Natural killer cell (primary cell): ENCODE measurements at regions of chr10 and their contacts with region 1.

Region 1: DNA sequence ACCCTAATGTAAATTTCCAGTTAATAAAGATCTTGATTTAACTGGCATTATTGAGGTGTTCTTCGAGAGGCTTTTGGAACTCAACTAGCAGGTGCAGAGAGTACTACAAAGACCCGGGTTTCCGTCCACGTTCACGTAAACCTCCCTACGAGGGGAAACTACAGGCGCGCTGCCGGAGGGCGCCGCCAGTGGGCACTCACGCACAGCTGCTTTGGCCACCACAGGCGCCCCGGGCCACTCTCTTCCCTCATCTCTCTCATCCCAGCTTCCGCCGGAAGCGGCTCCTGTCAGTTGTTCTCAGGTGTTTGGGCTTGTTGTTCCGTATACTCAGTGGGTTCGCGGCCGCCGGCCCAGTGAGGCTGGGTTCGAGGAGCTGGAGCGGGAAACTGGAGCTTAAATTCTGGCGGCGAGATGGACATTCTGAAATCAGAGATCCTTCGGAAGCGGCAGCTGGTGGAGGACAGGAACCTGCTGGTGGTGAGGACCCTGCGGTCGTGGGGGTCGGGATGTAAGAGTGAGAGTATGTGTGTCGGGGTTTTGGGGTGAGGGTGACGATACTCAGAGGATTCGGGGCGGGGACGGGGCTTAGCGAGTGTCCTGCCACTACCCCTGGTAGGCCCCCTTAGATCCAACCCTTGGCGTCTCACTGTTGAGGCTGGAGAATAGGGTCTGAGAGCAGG is at the start of gene PRPF18:
- DNase-seq: peak; percentile 92 to 96
- ATAC-seq: peak; percentile 99 to 100 (median 100)
- H3K4me3 ChIP-seq: peak within 1 kb of the TSS; percentile 96
- H3K4me3 Mint-ChIP-seq: peak within 1 kb of the TSS; percentile 100
- H3K27ac ChIP-seq: peak within 1 kb of the TSS; percentile 60
- H3K27ac Mint-ChIP-seq: peak within 1 kb of the TSS; percentile 95 to 99
- H3K4me1 ChIP-seq: peaks cover 13% of the 10 kb centered on the region
- H3K4me1 Mint-ChIP-seq: peaks cover 29 to 38% of the 10 kb centered on the region in 2 donors
- H3K27me3 ChIP-seq: peaks cover 2% of the 10 kb centered on the region
- H3K27me3 Mint-ChIP-seq: peaks cover 10 to 17% of the 10 kb centered on the region in 2 donors
- CTCF ChIP-seq: peak; percentile 92
- total RNA-seq, gene PRPF18: 29.5 to 39.3 (median 35.1) TPM

Region 2: GRCh38 chr10:13146383-13146782 is 440.4 kb before region 1 on chr10:
- intact Hi-C with region 1: no loop called
- DNase-seq: no peak
- ATAC-seq: no peak
- H3K4me3 ChIP-seq: no peak overlapping the region
- H3K4me3 Mint-ChIP-seq: no peak overlapping the region
- H3K27ac ChIP-seq: no peak overlapping the region
- H3K27ac Mint-ChIP-seq: no peak overlapping the region
- H3K4me1 ChIP-seq: no peaks in the 10 kb centered on the region
- H3K4me1 Mint-ChIP-seq: no peaks in the 10 kb centered on the region
- H3K27me3 ChIP-seq: no peaks in the 10 kb centered on the region
- H3K27me3 Mint-ChIP-seq: no peaks in the 10 kb centered on the region
- CTCF ChIP-seq: no peak

Region 3: DNA sequence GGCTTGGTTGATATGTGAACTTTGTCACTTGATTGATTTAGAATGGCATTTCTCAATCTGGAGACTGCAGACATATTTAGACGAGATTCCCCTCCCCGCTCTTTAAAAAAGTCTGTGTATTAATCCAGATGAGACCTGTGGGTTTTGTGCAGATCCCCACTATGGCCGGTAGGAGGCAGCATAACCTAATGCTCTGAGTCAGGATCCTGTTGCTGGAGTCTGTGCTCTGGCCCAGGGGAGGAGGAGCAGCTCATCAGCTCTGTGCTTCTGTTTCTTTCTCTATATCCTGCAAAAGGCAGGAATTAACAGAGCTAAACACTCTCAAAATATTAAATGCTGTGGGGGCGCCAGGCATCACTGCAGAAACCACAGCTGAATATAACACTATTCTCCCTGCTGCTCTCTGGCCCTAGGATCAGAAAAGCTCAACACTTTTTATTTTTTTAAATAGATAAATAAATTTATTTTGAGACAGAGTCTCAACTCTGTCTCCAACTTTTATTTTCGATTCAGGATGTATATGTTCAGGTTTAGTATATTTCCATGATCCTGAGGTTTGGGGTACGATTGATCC is 214.8 kb before region 1 on chr10:
- intact Hi-C with region 1: loop called (anchors 5 kb)
- DNase-seq: peak; percentile 38 to 90
- ATAC-seq: peak; percentile 90 to 100 (median 99)
- H3K4me3 ChIP-seq: no peak overlapping the region
- H3K4me3 Mint-ChIP-seq: no peak overlapping the region
- H3K27ac ChIP-seq: no peak overlapping the region
- H3K27ac Mint-ChIP-seq: no peak overlapping the region
- H3K4me1 ChIP-seq: no peaks in the 10 kb centered on the region
- H3K4me1 Mint-ChIP-seq: peaks cover 0 to 6% of the 10 kb centered on the region in 2 donors
- H3K27me3 ChIP-seq: no peaks in the 10 kb centered on the region
- H3K27me3 Mint-ChIP-seq: peaks cover 0 to 7% of the 10 kb centered on the region in 2 donors
- CTCF ChIP-seq: peak; percentile 95

Region 4: DNA sequence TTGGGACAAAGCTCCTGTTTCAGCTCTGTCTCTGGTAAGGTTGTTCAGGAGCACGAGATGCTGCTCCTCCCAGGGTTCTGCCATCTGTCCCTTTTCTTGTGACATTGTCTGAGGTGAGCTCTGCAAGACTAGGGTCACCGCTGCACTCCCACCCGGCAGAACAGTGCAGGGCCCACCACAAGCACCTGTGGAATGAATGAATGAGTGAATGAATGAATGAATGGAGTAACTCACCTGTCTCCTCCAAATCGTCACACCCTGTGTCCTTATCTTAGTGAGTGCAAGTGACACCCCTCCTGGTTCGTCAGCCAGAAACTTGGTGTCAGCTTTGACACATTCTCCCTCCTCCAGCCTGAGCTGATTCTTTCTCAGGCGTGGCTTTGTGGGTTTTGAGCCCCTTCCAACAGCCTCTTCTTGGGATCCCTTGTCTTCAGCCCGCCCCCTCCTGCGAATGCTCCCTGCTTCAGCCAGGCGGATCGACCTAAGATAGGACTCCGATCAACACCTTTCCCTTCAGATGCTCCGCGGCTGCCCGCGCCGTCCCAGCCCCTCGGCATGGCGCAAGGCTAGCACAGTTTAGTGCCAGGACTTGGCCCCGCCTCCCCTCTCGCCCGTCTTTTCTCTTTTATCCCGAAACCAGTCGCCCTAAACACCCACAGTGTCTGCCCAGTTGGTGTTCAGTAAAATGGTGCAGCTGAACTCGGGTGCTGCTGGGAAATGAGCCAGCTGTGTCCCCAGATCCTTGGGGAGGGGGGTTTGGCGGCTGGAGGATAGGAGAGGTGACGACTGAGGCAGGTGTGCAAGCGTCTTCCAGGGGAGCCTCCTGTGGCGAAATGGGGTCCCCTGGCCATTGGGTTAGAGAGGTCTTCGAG is 147.3 kb before region 1 on chr10:
- intact Hi-C with region 1: no loop called
- DNase-seq: peak in 1 of 2 donors; percentile 11
- ATAC-seq: peak in 1 of 3 donors; percentile 10
- H3K4me3 ChIP-seq: no peak overlapping the region
- H3K4me3 Mint-ChIP-seq: peak overlapping the region; percentile 58
- H3K27ac ChIP-seq: no peak overlapping the region
- H3K27ac Mint-ChIP-seq: no peak overlapping the region
- H3K4me1 ChIP-seq: peaks cover 13% of the 10 kb centered on the region
- H3K4me1 Mint-ChIP-seq: peaks cover 7 to 14% of the 10 kb centered on the region in 2 donors
- H3K27me3 ChIP-seq: peaks cover 4% of the 10 kb centered on the region
- H3K27me3 Mint-ChIP-seq: peaks cover 26 to 58% of the 10 kb centered on the region in 2 donors
- CTCF ChIP-seq: no peak

Region 5: DNA sequence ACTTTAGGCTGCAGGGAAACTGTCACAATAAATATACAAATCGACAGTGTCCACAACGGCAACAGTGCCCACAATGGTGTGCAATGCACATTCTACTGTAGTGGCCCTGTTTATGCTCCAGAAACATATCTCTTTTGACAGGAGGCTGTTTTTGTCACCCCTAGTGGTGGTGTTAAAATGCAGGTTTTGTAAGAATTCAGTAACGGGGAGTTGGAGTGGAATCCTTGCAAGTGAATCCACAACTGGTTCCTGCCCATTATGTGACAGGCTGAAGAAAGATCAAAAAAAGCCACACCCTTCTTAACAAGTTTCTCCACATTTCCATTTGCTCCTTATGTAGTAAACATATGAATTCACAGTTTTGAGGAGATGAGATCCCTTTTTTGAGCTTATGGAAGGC is 116.5 kb before region 1 on chr10:
- intact Hi-C with region 1: no loop called
- DNase-seq: no peak
- ATAC-seq: no peak
- H3K4me3 ChIP-seq: no peak overlapping the region
- H3K4me3 Mint-ChIP-seq: no peak overlapping the region
- H3K27ac ChIP-seq: no peak overlapping the region
- H3K27ac Mint-ChIP-seq: no peak overlapping the region
- H3K4me1 ChIP-seq: no peaks in the 10 kb centered on the region
- H3K4me1 Mint-ChIP-seq: no peaks in the 10 kb centered on the region
- H3K27me3 ChIP-seq: no peaks in the 10 kb centered on the region
- H3K27me3 Mint-ChIP-seq: no peaks in the 10 kb centered on the region
- CTCF ChIP-seq: no peak

Region 6: GRCh38 chr10:13528875-13529713 is 57.7 kb before region 1 on chr10 and contains the start of gene BEND7:
- intact Hi-C with region 1: no loop called
- DNase-seq: no peak
- ATAC-seq: peak; percentile 37 to 67 (median 38)
- H3K4me3 ChIP-seq: no peak within 1 kb of the TSS
- H3K4me3 Mint-ChIP-seq: peak within 1 kb of the TSS; percentile 80
- H3K27ac ChIP-seq: no peak within 1 kb of the TSS
- H3K27ac Mint-ChIP-seq: no peak within 1 kb of the TSS
- H3K4me1 ChIP-seq: peaks cover 7% of the 10 kb centered on the region
- H3K4me1 Mint-ChIP-seq: peaks cover 6 to 10% of the 10 kb centered on the region in 2 donors
- H3K27me3 ChIP-seq: peaks cover 32% of the 10 kb centered on the region
- H3K27me3 Mint-ChIP-seq: peaks cover 53 to 67% of the 10 kb centered on the region in 2 donors
- CTCF ChIP-seq: no peak
- total RNA-seq, gene BEND7: 0.38 TPM in 1 of 3 donors, not detected in the others

Region 7: DNA sequence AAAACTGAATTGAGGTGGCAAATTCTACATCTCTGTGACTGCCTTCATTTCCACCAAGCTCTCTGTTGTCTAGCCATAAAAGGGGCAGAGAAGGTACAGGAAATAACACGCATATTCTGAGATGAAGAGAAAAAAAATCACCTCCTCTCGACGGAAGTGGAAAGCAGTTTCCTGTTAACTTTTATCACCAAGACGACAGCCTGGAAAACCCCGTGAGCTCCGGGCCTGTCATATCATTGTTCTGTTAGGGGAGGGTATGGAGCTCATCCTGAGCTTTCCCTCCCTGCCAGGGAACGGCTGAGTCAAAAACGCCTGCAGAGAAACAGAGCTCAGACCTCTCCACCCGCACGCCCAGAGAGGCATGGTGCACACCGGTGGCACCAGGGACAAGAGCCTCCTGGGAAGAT is 200.2 kb after region 1 on chr10:
- intact Hi-C with region 1: loop called (anchors 5 kb)
- DNase-seq: peak; percentile 63 to 95
- ATAC-seq: peak; percentile 90 to 93 (median 92)
- H3K4me3 ChIP-seq: peak overlapping the region; percentile 4
- H3K4me3 Mint-ChIP-seq: peak overlapping the region; percentile 60
- H3K27ac ChIP-seq: peak overlapping the region; percentile 89
- H3K27ac Mint-ChIP-seq: no peak overlapping the region
- H3K4me1 ChIP-seq: peaks cover 36% of the 10 kb centered on the region
- H3K4me1 Mint-ChIP-seq: peaks cover 20 to 25% of the 10 kb centered on the region in 2 donors
- H3K27me3 ChIP-seq: no peaks in the 10 kb centered on the region
- H3K27me3 Mint-ChIP-seq: no peaks in the 10 kb centered on the region
- CTCF ChIP-seq: no peak